ENCODE measurements at regions of chr9 and their contacts with region 1.

Region 1: GRCh38 chr9:2727966-2728613 is 10.8 kb downstream of the KCNV2 start:
- DNase-seq: peak; percentile 62
- H3K4me3 Mint-ChIP-seq: no peak overlapping the region
- H3K27ac Mint-ChIP-seq: no peak overlapping the region
- H3K4me1 Mint-ChIP-seq: peaks cover 6% of the 10 kb centered on the region
- H3K27me3 Mint-ChIP-seq: no peaks in the 10 kb centered on the region
- CTCF ChIP-seq: peak; percentile 36

Region 2: DNA sequence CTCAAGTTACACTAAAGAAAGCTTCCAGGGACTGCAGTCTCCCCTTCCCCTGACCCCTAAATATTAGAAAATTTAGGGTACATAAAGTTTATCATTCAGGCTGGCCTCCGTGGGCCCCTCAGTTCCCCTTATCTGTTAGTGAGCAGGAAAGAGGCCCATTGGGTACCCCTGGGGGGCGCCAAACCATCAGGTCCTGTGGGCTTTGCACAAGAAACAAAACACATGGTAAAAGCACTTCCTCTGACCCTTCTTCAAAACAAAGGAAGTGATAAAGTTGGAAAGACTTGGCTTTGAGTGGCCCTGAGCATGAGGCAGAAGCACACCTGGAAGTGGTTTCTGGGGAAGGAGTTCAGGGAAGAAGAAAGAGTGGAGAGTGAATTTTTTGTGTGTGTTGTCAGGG is 500.0 kb before region 1 on chr9:
- CTCF ChIA-PET with region 1: interaction called, 12 read pairs
- POLR2A ChIA-PET with region 1: no interaction called
- intact Hi-C with region 1: loop called (anchors 2 kb)
- DNase-seq: peak; percentile 34
- H3K4me3 Mint-ChIP-seq: no peak overlapping the region
- H3K27ac Mint-ChIP-seq: no peak overlapping the region
- H3K4me1 Mint-ChIP-seq: peaks cover 6% of the 10 kb centered on the region
- H3K27me3 Mint-ChIP-seq: no peaks in the 10 kb centered on the region
- CTCF ChIP-seq: no peak

Region 3: DNA sequence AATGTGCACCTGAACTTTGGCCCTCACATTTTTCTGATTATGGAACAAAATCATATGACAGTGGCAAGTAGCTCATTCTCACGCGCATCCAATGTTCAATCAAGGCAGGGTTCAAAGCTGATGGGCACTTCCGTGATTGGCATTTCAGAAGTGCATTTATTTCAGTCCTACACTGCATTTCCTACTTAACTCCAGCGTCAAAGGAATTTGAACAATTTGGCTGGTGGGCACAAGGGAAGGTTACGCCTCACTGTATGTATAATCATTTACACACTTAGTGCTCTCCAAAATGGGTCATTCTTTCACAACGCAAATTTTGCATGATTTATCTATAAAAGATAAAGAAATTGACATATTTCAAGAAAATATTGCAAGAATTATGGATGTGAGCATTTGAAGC is 274.4 kb before region 1 on chr9:
- CTCF ChIA-PET with region 1: no interaction called
- POLR2A ChIA-PET with region 1: no interaction called
- intact Hi-C with region 1: no loop called
- DNase-seq: no peak
- H3K4me3 Mint-ChIP-seq: no peak overlapping the region
- H3K27ac Mint-ChIP-seq: no peak overlapping the region
- H3K4me1 Mint-ChIP-seq: no peaks in the 10 kb centered on the region
- H3K27me3 Mint-ChIP-seq: no peaks in the 10 kb centered on the region
- CTCF ChIP-seq: no peak

Region 4: GRCh38 chr9:2469681-2470221 is 258.3 kb before region 1 on chr9:
- CTCF ChIA-PET with region 1: no interaction called
- POLR2A ChIA-PET with region 1: no interaction called
- intact Hi-C with region 1: loop called (anchors 1 kb)
- DNase-seq: peak; percentile 22
- H3K4me3 Mint-ChIP-seq: no peak overlapping the region
- H3K27ac Mint-ChIP-seq: no peak overlapping the region
- H3K4me1 Mint-ChIP-seq: no peaks in the 10 kb centered on the region
- H3K27me3 Mint-ChIP-seq: no peaks in the 10 kb centered on the region
- CTCF ChIP-seq: peak; percentile 13

Region 5: GRCh38 chr9:3028535-3028934 is 300.4 kb after region 1 on chr9:
- CTCF ChIA-PET with region 1: no interaction called
- POLR2A ChIA-PET with region 1: no interaction called
- intact Hi-C with region 1: no loop called
- DNase-seq: peak; percentile 6
- H3K4me3 Mint-ChIP-seq: no peak overlapping the region
- H3K27ac Mint-ChIP-seq: no peak overlapping the region
- H3K4me1 Mint-ChIP-seq: no peaks in the 10 kb centered on the region
- H3K27me3 Mint-ChIP-seq: peaks cover 38% of the 10 kb centered on the region
- CTCF ChIP-seq: no peak